WTC11 (cell line): ENCODE measurements at regions of chr1 and their contacts with region 1.

Region 1: DNA sequence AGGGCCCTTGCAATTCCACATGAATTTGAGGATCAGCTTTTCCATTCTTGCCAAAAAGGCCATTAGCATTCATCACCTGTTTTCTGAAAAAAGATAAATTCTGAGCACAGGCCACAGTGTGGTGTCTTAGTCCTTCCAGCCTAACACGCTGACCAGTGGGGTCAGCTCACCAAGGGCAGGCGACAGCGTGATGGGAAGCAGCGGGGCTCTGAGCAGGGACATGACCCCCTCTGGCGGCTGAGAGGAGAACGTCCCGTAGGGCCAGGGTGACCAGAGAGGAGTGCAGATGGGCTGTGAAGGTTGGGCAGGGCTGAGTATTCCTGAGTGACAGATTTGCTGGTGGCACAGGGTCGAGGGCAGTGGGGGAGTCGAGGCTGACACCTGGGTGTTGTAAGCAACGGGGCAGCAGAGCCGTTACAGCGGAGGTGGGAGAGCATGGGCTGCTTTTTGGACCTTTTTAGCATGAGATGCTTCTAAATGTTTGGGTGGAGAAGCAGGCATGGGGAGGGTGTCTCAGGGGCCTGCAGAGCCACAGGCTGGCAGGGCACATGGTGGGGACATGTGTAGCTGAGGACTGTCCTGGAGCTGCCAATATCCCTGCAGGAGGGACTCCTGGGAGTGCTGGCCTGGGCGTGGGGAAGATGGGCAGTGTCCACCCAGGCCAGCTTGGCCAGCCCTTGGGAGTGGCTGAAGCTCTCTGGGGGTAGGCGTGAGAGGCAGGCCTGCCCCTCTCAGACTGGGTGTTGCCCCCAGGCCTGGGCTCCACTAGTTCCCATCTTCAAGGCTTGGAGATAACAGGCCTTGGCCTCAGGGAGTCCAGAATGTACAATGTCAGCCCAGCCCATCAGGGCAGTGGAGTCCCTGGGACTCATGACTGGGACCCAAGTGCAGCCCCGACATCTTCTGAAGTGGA is 8.6 kb upstream of the CALML6 start:
- DNase-seq: peak; percentile 89
- ATAC-seq: peak; percentile 68
- H3K4me3 Mint-ChIP-seq: peak overlapping the region; percentile 42; the same call in 1 of the 2 replicates
- H3K27ac Mint-ChIP-seq: peak overlapping the region; percentile 84; the same call in 1 of the 2 replicates
- H3K4me1 Mint-ChIP-seq: peaks cover 19% of the 10 kb centered on the region
- H3K27me3 Mint-ChIP-seq: no peaks in the 10 kb centered on the region; the same call in 1 of the 2 replicates
- CTCF ChIP-seq: peak; percentile 63

Region 2: DNA sequence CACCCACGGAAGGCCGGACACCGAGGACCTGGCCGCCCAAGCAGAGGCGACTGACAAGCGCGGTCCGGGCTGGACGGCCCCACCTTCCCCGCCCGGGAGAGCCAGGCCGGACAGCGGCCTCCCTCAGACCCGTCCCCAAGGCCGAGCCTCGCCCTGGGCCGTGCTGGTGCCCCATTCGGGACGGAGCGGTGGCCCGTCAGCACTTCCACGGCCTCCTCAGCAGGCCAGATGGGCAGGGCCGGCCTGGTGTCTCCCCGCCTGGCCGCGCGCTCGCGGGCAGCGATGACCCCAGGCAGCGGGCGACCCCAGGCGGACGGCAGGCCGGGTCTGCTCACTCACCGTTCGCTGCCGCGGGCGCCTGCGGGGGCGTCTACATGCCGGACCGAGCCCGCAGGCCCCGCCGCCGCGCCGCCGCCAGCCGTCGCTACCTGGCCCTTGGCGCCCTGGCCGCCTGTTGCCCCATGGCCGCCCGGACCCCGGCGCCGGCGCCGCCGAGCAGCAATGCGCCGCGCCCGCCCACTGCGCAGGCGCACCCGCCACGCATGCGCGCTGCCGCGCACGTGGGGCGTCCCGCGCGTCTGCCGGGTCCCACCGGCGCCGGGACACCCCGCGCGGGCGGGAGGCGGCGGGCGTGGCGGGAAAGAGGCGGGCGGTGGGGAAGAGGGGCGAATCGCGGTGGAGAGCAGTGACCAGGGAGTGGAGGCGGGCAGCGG is 128.3 kb before region 1 on chr1 and contains the start of gene NADK:
- CTCF ChIA-PET with region 1: interaction called, 24 read pairs
- POLR2A ChIA-PET with region 1: interaction called, 7 read pairs
- DNase-seq: peak; percentile 64
- ATAC-seq: peak; percentile 1
- H3K4me3 Mint-ChIP-seq: peak within 1 kb of the TSS; percentile 81
- H3K27ac Mint-ChIP-seq: peak within 1 kb of the TSS; percentile 99
- H3K4me1 Mint-ChIP-seq: peaks cover 49% of the 10 kb centered on the region
- H3K27me3 Mint-ChIP-seq: no peaks in the 10 kb centered on the region
- CTCF ChIP-seq: no peak
- total RNA-seq, gene NADK: 106 to 124 TPM (median 119 TPM) in 3 replicates

Region 3: DNA sequence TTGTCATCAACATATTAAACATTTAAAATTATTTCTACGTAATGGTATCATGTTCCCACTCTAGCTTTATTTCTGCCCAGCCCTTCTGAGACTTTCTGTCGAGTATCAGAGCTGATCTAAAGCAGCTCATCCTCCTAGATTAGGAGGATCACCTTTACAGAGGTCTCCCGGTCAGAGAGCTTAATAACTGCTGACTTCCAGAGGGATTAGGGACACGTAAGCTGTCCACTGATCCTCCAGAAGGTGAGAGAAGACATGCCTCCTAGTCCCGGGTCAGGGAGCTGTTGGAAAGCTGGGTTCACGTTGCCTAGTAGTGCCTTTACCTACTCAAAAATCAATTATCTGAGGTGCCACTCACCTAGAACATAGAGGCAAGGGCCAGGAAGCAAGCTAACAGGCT is 97.0 kb before region 1 on chr1:
- CTCF ChIA-PET with region 1: interaction called, 10 read pairs
- POLR2A ChIA-PET with region 1: no interaction called
- DNase-seq: no peak
- ATAC-seq: no peak
- H3K4me3 Mint-ChIP-seq: no peak overlapping the region
- H3K27ac Mint-ChIP-seq: no peak overlapping the region; the same call in 1 of the 2 replicates
- H3K4me1 Mint-ChIP-seq: no peaks in the 10 kb centered on the region
- H3K27me3 Mint-ChIP-seq: no peaks in the 10 kb centered on the region
- CTCF ChIP-seq: no peak

Region 4: GRCh38 chr1:1858382-1859086 is 47.9 kb before region 1 on chr1:
- CTCF ChIA-PET with region 1: interaction called, 14 read pairs
- POLR2A ChIA-PET with region 1: interaction called, 3 read pairs
- DNase-seq: peak; percentile 28
- ATAC-seq: peak; percentile 21; the same call in 1 of the 2 replicates
- H3K4me3 Mint-ChIP-seq: no peak overlapping the region; the same call in 1 of the 2 replicates
- H3K27ac Mint-ChIP-seq: peak overlapping the region; percentile 79
- H3K4me1 Mint-ChIP-seq: peaks cover 36% of the 10 kb centered on the region
- H3K27me3 Mint-ChIP-seq: no peaks in the 10 kb centered on the region
- CTCF ChIP-seq: no peak

Region 5: GRCh38 chr1:1919304-1920056 is 13.0 kb after region 1 on chr1:
- CTCF ChIA-PET with region 1: interaction called, 19 read pairs
- POLR2A ChIA-PET with region 1: no interaction called
- DNase-seq: peak; percentile 100
- ATAC-seq: peak; percentile 87
- H3K4me3 Mint-ChIP-seq: peak overlapping the region; percentile 30
- H3K27ac Mint-ChIP-seq: no peak overlapping the region
- H3K4me1 Mint-ChIP-seq: peaks cover 7% of the 10 kb centered on the region; the same call in 1 of the 2 replicates
- H3K27me3 Mint-ChIP-seq: no peaks in the 10 kb centered on the region
- CTCF ChIP-seq: no peak

Region 6: GRCh38 chr1:1959840-1960479 is 53.5 kb after region 1 on chr1:
- CTCF ChIA-PET with region 1: interaction called, 13 read pairs
- POLR2A ChIA-PET with region 1: no interaction called
- DNase-seq: peak; percentile 96
- ATAC-seq: peak; percentile 89
- H3K4me3 Mint-ChIP-seq: peak overlapping the region; percentile 49
- H3K27ac Mint-ChIP-seq: no peak overlapping the region; the same call in 1 of the 2 replicates
- H3K4me1 Mint-ChIP-seq: peaks cover 20% of the 10 kb centered on the region
- H3K27me3 Mint-ChIP-seq: no peaks in the 10 kb centered on the region; the same call in none of the 2 replicates
- CTCF ChIP-seq: peak; percentile 90